Sigmoid colon (tissue), 7 donors: ENCODE measurements at regions of chr14 and their contacts with region 1.

Region 1: GRCh38 chr14:32710731-32711680 is 227.7 kb upstream of the NPAS3 start:
- DNase-seq: no peak
- H3K4me3 ChIP-seq: peak overlapping the region; percentile 5 to 36 (median 31)
- H3K27ac ChIP-seq: peak overlapping the region; percentile 67 to 82 (median 78)
- H3K4me1 ChIP-seq: peaks cover 0 to 48% (median 31%) of the 10 kb centered on the region in 4 donors
- H3K27me3 ChIP-seq: no peaks in the 10 kb centered on the region
- CTCF ChIP-seq: peak in 3 of 4 experiments; percentile 46 to 53 (median 52)
- EP300 ChIP-seq: no peak
- POLR2A ChIP-seq: no peak

Region 2: GRCh38 chr14:32883188-32883587 is 172.2 kb after region 1 on chr14:
- intact Hi-C with region 1: no loop called
- DNase-seq: no peak
- H3K4me3 ChIP-seq: no peak overlapping the region
- H3K27ac ChIP-seq: no peak overlapping the region
- H3K4me1 ChIP-seq: no peaks in the 10 kb centered on the region
- H3K27me3 ChIP-seq: no peaks in the 10 kb centered on the region
- CTCF ChIP-seq: no peak
- EP300 ChIP-seq: no peak
- POLR2A ChIP-seq: no peak

Region 3: DNA sequence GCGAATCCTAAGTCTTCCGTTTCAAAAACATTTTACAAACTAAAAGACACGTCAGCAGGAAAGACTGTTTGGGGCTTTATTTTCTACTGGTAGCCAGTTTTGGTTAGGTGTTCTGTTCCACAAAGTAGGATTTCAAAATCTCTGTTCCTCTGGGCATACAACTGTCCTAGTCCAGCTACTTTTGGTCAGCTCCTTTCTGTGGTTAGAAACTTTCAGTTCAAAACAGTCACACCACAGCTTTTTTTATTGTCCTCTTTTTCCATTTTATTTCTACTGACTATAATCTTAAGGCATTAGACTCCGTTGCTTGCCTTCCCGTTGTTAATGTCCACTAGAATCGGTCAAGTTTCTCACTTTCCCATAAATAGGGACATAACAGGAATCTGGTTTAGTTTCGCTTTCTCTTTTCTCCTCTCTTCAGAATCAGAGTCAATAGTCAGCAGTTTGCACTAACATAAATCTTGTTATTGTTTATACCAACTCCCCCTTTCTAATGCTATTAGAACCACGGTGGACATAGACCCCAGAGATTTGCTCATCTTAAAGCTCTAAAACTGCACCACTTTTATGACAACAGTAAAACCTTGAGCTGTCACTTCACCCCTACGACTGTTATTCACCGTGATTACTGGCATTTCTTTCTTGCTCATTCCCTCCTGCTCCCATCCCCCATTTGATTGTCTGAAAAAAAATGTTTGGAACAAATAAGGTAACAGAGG is 186.1 kb after region 1 on chr14:
- intact Hi-C with region 1: loop called (anchors 5 kb)
- DNase-seq: no peak
- H3K4me3 ChIP-seq: peak overlapping the region; percentile 29 to 55 (median 54)
- H3K27ac ChIP-seq: peak overlapping the region; percentile 68 to 85 (median 82)
- H3K4me1 ChIP-seq: peaks cover 0 to 6% (median 3%) of the 10 kb centered on the region in 4 donors
- H3K27me3 ChIP-seq: no peaks in the 10 kb centered on the region
- CTCF ChIP-seq: no peak
- EP300 ChIP-seq: no peak
- POLR2A ChIP-seq: no peak

Region 4: DNA sequence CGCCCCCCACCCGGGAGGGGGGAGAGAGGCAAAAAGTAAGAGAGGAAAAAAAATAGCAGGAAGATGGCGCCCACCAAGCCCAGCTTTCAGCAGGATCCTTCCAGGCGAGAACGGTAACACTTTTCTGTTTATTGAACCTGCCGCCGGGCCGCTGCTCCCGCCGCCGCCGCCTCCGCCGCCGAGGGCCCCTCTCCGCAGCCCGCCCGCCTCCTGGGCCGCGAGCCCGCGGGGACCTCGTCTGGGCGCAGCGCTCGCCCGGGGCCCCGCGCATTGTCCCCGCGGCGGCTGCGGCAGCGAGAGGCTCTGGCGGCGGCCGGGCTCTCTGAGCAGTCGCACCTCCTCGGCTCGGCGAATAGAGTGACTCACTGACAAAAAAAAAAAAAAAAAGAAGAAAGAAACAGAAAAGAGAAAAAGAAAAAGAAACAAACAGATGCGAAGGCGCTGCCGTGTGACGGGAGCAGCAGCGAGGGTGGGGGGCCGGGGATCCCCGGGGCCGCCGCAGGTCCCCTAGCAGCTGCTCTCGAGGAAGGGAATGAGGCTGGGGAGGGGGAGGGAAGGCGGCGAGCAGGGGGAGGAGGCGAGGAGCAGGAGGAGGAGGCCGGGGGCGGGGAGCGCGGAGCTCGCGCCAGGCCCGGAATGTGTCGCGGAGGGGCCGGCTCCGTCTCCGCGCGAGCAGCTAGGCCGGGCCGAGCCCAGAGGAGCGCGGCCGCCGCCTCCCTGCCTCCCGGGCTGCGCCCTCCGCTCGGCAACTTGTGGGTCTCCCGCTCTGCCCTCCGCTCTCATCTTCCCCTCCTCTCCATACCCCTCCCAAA is 228.5 kb after region 1 on chr14:
- intact Hi-C with region 1: loop called (anchors 2 kb)
- DNase-seq: peak; percentile 95
- H3K4me3 ChIP-seq: peak overlapping the region; percentile 54 to 88 (median 71)
- H3K27ac ChIP-seq: peak overlapping the region; percentile 90 to 98 (median 94)
- H3K4me1 ChIP-seq: peaks cover 0 to 28% (median 22%) of the 10 kb centered on the region in 4 donors
- H3K27me3 ChIP-seq: peaks cover 0 to 9% (median 0%) of the 10 kb centered on the region in 3 donors
- CTCF ChIP-seq: no peak
- EP300 ChIP-seq: no peak
- POLR2A ChIP-seq: peak; percentile 19 to 36

Region 5: DNA sequence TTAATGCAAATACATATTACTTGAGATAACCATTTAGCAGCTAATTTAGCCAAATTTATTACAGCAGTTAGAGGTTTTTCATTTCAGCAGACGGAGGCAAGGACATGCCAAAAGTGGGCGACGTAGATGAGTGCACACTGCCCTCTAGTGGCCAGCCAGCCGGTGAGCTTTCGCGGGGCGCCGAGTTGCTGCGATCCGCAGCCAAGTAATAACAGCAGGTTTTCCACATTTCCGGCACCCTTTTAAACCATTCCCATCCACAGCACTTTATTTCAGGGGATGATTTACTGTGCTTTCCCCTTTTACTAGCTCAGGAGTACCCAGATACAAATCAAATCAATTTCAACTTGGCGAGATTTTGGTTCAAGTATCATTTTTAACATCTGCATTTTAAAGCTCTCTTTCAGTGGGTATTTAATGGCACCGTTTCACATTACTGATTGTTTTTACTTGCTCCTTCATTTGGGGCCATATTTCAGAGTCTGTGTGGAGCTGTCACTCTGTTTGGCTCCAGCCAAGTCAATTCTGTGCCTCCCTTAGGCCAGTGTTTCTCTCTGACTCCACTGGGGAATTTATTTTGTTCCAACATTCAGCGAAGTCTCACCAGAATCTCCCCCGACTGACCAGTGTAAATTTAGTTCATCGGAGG is 1081.8 kb after region 1 on chr14:
- intact Hi-C with region 1: loop called (anchors 2 kb)
- DNase-seq: peak; percentile 90
- H3K4me3 ChIP-seq: peak overlapping the region in 3 of 4 donors; percentile 21 to 40 (median 36)
- H3K27ac ChIP-seq: peak overlapping the region in 3 of 4 donors; percentile 14 to 36 (median 32)
- H3K4me1 ChIP-seq: peaks cover 0 to 15% (median 1%) of the 10 kb centered on the region in 4 donors
- H3K27me3 ChIP-seq: no peaks in the 10 kb centered on the region
- CTCF ChIP-seq: peak; percentile 78 to 94 (median 83)
- EP300 ChIP-seq: no peak
- POLR2A ChIP-seq: no peak

Region 6: DNA sequence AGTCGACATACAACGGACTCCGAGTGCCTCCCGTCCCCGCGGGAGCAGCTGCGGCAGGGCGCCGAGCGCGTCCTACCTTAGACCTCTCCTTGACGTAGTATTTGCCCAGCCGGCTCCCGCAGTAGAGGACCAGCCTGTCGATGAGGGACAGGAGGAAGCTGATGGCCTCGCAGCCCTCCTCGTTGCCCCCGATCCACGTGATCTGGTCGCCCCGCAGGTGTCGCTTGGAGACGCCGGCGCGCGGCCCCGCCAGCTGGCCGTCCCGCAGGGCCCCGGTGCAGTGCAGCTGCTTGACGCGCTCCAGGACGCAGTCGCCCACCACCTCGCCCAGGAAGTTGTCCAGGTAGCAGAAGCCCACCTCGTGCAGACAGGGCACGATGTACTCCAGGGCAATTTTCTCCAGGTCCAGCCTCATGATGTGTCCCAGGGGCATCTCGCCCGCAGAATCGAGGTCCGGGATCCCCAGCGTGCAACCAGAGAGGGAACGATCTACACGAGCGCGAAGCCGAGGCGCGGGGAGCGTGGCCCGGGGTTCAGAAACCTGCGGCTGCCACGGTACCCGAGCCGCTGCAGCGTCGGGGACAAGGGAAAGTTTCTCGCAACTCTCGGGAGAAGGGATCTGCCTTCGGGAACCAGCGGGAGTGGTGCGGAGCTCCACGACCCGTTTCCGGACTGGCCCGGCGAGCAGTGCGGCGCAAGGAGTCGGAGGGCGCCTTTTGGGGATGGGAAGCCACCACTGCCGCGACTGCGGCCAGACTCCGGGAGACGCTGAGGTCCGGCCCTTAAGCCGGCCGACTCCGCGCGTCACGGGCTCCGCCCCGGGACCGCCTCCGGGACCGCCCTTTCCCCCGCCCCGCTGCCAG is 1239.5 kb after region 1 on chr14 and contains the start of gene EGLN3:
- intact Hi-C with region 1: loop called (anchors 5 kb)
- DNase-seq: peak; percentile 95
- H3K4me3 ChIP-seq: peak within 1 kb of the TSS; percentile 63 to 83 (median 78)
- H3K27ac ChIP-seq: peak within 1 kb of the TSS; percentile 79 to 88 (median 85)
- H3K4me1 ChIP-seq: peaks cover 0 to 44% (median 28%) of the 10 kb centered on the region in 4 donors
- H3K27me3 ChIP-seq: no peaks in the 10 kb centered on the region
- CTCF ChIP-seq: no peak
- EP300 ChIP-seq: peak in 1 of 4 donors; percentile 49
- POLR2A ChIP-seq: peak; percentile 96 to 98
- total RNA-seq, gene EGLN3: 13.0 to 18.5 (median 13.2) TPM